CD8-positive, alpha-beta memory T cell (primary cell): ENCODE measurements at regions of chr6 and their contacts with region 1.

Region 1: DNA sequence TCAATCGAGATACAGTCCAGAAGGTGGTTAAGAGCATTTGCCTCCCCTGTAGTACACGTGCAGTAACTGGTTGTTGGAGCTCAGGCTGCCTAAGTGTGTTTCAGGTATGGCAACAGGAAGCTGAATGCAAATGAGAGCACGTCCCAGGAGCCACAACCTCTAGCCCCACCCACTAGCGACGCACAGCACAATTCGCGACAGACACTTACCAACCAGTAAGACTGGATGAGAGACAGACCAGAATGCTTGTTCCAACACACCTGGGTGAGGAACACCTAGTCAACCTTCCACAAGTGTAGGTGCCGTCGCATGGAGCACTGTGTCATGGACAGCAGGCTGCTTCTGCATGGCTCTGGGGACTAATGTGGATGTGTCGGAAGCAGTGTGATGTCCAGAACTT is 7.2 kb upstream of the SERPINB1 start:
- DNase-seq: peak; percentile 19 to 77 (median 55)
- H3K4me3 ChIP-seq: no peak overlapping the region
- H3K4me3 Mint-ChIP-seq: peak overlapping the region in 5 of 7 donors; percentile 4 to 62 (median 30)
- H3K27ac ChIP-seq: no peak overlapping the region
- H3K27ac Mint-ChIP-seq: peak overlapping the region in 7 of 8 donors; percentile 1 to 94 (median 89)
- H3K4me1 ChIP-seq: peaks cover 31% of the 10 kb centered on the region
- H3K4me1 Mint-ChIP-seq: peaks cover 32 to 44% (median 34%) of the 10 kb centered on the region in 3 donors
- H3K27me3 ChIP-seq: no peaks in the 10 kb centered on the region
- H3K27me3 Mint-ChIP-seq: no peaks in the 10 kb centered on the region

Region 2: GRCh38 chr6:2866181-2866846 is 17.5 kb after region 1 on chr6:
- CTCF ChIA-PET with region 1: interaction called, 16 read pairs
- POLR2A ChIA-PET with region 1: interaction called, 7 read pairs
- DNase-seq: no peak
- H3K4me3 ChIP-seq: no peak overlapping the region
- H3K4me3 Mint-ChIP-seq: no peak overlapping the region
- H3K27ac ChIP-seq: no peak overlapping the region
- H3K27ac Mint-ChIP-seq: peak overlapping the region in 4 of 8 donors; percentile 10 to 89 (median 63)
- H3K4me1 ChIP-seq: peaks cover 35% of the 10 kb centered on the region
- H3K4me1 Mint-ChIP-seq: peaks cover 40 to 68% (median 53%) of the 10 kb centered on the region in 3 donors
- H3K27me3 ChIP-seq: no peaks in the 10 kb centered on the region
- H3K27me3 Mint-ChIP-seq: no peaks in the 10 kb centered on the region

Region 3: GRCh38 chr6:2911171-2911570 is 62.3 kb after region 1 on chr6:
- CTCF ChIA-PET with region 1: interaction called, 61 read pairs
- POLR2A ChIA-PET with region 1: interaction called, 12 read pairs
- DNase-seq: no peak
- H3K4me3 ChIP-seq: no peak overlapping the region
- H3K4me3 Mint-ChIP-seq: no peak overlapping the region
- H3K27ac ChIP-seq: no peak overlapping the region
- H3K27ac Mint-ChIP-seq: no peak overlapping the region
- H3K4me1 ChIP-seq: no peaks in the 10 kb centered on the region
- H3K4me1 Mint-ChIP-seq: peaks cover 8 to 22% (median 22%) of the 10 kb centered on the region in 3 donors
- H3K27me3 ChIP-seq: no peaks in the 10 kb centered on the region
- H3K27me3 Mint-ChIP-seq: no peaks in the 10 kb centered on the region